Left ventricle myocardium inferior (tissue), 1 donor: ENCODE measurements at regions of chr7 and their contacts with region 1.

Region 1: DNA sequence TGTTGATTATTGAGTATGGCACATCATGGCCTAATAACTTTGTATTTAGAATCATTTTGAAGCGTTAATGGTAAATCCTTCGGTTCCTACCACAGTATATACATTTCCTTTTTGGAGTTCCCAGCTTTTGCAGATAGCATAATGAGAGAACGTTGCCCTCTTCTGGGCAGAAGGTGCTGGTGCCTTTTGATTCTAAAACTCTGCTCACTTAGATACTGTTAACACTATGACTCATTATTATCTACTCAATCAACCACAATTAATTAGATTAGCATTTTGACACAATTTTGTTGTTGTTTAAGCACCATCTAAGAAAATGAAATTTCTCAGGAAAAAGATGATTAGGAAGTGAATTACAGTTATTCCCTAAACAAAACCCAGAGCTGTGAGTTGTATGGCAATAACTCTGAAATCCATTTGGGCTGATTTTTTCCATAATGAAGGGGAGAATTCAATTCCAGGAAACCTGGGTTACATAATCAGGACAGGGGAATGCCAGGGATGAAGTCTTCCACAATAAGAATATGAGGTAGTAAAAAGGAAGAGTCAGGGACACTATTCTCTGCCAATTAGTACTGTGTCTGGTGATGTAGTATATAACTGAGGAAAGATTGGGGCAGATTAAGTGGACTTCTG is 11.5 kb upstream of the DLD start:
- DNase-seq: no peak
- H3K4me3 ChIP-seq: no peak overlapping the region
- H3K27ac ChIP-seq: no peak overlapping the region
- H3K4me1 ChIP-seq: peaks cover 9% of the 10 kb centered on the region
- H3K27me3 ChIP-seq: no peaks in the 10 kb centered on the region
- CTCF ChIP-seq: peak; percentile 79

Region 2: DNA sequence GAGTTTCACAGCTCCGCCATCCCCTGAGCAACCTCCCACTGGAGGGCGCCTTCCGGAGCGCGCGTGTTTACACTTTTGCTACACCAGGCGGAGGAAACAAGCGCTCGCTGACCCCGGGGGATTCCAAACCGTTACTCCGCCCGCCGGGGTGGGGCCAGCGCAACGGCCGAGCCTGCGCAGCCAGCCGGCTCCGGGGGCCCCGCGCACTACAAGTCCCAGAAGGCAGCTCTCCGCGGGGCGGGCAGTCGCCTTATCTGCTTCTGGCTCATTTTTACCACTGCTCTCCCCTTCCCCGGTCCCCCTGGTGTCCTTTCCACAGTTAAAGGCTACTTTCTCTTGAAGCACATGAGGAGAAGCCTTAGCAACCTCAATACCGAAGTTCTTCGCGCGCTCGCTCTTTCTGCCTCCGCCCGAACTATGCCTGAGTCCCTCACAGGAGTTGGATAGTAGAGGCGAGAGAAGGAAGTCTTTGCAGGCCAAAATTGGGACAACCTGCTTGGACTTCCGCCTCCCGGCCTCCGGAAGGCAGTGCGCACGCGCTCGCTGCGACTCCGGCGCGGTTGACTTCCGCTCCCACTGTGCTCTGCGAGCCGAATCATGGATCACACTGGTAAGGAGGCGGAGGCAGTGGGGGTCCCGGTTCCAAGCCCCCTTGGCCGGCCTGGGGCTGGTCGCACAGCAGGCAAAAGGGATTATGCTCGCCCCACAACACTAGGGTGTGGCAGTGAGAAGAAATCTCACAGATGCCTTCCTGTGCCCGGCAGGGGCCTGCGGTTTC is 135.8 kb before region 1 on chr7 and contains the start of gene CBLL1:
- intact Hi-C with region 1: loop called (anchors 10 kb)
- DNase-seq: peak; percentile 98
- H3K4me3 ChIP-seq: peak within 1 kb of the TSS; percentile 81
- H3K27ac ChIP-seq: peak within 1 kb of the TSS; percentile 99
- H3K4me1 ChIP-seq: peaks cover 56% of the 10 kb centered on the region
- H3K27me3 ChIP-seq: no peaks in the 10 kb centered on the region
- CTCF ChIP-seq: peak; percentile 80
- total RNA-seq, gene CBLL1: 21.6 TPM

Region 3: DNA sequence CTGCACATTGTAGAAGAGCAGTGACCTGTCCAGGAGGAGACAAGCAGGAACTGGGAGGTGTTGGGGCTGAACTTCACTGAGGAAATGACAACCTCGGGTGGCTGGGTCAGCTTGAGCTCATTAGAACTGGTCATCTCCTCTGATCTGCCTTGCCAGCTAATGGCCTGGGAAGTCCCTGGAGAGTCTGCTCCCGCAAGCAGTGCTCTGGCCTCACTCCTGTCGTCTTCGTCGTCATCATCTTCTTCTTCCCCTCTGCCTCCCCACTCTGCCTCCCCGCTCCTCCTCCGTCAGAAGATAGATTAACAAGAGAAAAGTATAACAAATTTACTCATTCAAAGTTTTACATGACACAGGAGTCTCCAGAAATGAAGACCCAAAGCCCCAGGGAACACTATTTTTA is 1115.4 kb after region 1 on chr7:
- intact Hi-C with region 1: no loop called
- DNase-seq: no peak
- H3K4me3 ChIP-seq: no peak overlapping the region
- H3K27ac ChIP-seq: no peak overlapping the region
- H3K4me1 ChIP-seq: no peaks in the 10 kb centered on the region
- H3K27me3 ChIP-seq: no peaks in the 10 kb centered on the region
- CTCF ChIP-seq: no peak